Esophagus muscularis mucosa (tissue), 4 donors: ENCODE measurements at regions of chr16 and their contacts with region 1.

Region 1: DNA sequence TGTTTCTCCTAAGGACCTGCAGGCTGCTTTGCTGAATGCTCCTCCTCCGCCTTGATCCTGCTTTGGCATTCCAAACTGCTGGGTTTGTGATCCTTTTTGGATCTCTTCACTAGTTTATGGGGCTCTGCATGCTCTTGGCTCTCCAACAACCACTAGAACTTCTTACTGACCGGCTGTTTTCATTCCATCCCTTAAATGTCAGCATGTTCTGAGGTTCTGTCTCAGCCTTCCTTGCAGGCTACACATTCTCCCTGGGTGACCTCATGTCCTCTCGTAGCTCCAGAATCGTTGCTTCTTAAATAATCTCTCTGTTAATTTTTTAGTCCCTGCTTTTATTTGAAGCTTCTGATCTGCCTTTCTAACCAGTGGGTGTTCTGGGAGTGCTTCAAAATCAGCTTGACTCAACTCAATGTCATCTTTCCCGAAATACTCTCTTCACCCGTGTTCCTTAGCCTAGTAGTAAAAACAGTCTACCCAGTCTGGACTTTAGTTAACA is 119.0 kb upstream of the HS3ST2 start:
- DNase-seq: no peak
- H3K4me3 ChIP-seq: peak overlapping the region in 1 of 4 donors; percentile 10
- H3K27ac ChIP-seq: peak overlapping the region; percentile 58 to 84 (median 82)
- H3K4me1 ChIP-seq: peaks cover 13 to 53% (median 27%) of the 10 kb centered on the region in 4 donors
- H3K27me3 ChIP-seq: no peaks in the 10 kb centered on the region
- CTCF ChIP-seq: no peak
- EP300 ChIP-seq: no peak
- POLR2A ChIP-seq: no peak

Region 2: GRCh38 chr16:21565861-21566669 is 1128.9 kb before region 1 on chr16:
- intact Hi-C with region 1: loop called (anchors 5 kb)
- DNase-seq: no peak
- H3K4me3 ChIP-seq: no peak overlapping the region
- H3K27ac ChIP-seq: no peak overlapping the region
- H3K4me1 ChIP-seq: peaks cover 0 to 4% (median 0%) of the 10 kb centered on the region in 4 donors
- H3K27me3 ChIP-seq: no peaks in the 10 kb centered on the region
- CTCF ChIP-seq: no peak
- EP300 ChIP-seq: no peak
- POLR2A ChIP-seq: no peak

Region 3: DNA sequence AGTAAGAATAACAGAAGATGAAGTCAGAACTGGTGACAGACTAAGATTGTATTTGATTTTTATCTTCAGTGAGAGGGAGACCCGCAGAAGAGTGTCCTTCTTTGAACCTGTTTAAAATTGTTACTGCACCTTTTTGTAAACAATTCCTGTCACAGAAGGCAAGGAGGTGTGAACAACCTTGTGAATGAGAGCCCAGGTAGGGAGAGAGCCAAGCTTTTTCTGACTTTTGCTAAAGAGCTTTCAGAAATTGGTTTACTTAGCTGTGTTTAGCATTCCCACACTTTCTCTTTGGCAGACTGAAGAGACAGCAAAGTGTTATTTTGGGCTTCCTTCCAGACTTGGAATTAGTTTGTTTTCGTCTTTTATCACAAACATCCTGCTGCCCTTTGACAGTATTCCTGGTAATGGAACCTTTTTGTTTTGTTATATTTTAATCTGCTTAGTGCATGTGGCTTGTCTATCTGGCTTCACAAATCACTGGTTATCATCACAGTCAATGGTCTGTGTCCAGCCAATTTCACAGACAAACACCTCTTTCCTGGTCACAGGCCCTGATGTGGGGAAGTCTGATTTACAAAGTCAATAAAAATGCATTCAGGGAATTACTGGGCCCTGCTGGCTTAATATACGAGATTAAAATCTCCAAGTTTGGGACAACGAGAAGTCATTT is 33.4 kb after region 1 on chr16:
- intact Hi-C with region 1: no loop called
- DNase-seq: no peak
- H3K4me3 ChIP-seq: no peak overlapping the region
- H3K27ac ChIP-seq: peak overlapping the region in 1 of 4 donors; percentile 19
- H3K4me1 ChIP-seq: peaks cover 0 to 22% (median 17%) of the 10 kb centered on the region in 4 donors
- H3K27me3 ChIP-seq: no peaks in the 10 kb centered on the region
- CTCF ChIP-seq: no peak
- EP300 ChIP-seq: no peak
- POLR2A ChIP-seq: no peak

Region 4: GRCh38 chr16:22787466-22788189 is 92.7 kb after region 1 on chr16:
- intact Hi-C with region 1: no loop called
- DNase-seq: no peak
- H3K4me3 ChIP-seq: no peak overlapping the region
- H3K27ac ChIP-seq: no peak overlapping the region
- H3K4me1 ChIP-seq: no peaks in the 10 kb centered on the region
- H3K27me3 ChIP-seq: no peaks in the 10 kb centered on the region
- CTCF ChIP-seq: no peak
- EP300 ChIP-seq: no peak
- POLR2A ChIP-seq: no peak